ENCODE measurements at regions of chr7 and their contacts with region 1.

Region 1: DNA sequence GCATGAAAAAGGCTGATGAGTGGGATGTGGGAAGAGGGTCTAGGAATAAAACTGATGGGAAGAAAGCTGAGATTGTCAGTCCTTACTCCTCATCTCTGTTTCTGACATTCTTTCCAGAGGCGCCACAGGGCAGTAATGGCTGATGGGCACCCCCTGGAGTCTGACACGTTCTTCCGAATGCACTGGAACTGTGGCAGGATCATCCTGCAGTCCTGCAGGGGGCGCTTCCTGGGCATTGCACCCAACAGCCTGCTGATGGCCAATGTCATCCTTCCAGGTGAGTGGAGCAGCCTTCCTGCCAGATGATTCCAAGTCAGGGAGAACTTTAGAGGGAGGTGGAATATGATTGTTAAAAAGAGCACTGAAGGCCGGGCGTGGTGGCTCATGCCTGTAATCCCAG is 4.8 kb downstream of the FSCN3 start:
- DNase-seq: no peak
- H3K4me3 ChIP-seq: no peak overlapping the region
- CTCF ChIP-seq: no peak
- POLR2A ChIP-seq: no peak

Region 2: DNA sequence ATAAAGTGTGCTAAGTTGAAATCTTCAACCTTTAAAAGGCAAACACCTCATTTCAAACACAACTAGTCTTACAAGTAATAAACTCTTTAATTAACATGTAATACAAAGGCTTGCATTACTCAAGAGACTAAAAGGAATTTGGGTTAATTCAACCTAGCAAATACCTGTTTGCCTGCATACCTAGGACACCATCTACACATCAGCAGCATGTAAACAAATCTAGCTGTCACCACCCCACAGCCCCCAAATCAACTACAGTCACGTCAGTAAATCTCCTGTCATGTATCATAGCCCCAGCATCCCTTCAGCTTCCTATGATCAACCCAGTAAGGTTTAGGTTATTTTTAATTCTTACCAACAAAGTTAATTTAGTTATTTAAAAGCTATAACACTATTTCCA is 239.3 kb before region 1 on chr7:
- intact Hi-C with region 1: no loop called
- DNase-seq: no peak
- H3K4me3 ChIP-seq: no peak overlapping the region
- CTCF ChIP-seq: no peak
- POLR2A ChIP-seq: no peak

Region 3: DNA sequence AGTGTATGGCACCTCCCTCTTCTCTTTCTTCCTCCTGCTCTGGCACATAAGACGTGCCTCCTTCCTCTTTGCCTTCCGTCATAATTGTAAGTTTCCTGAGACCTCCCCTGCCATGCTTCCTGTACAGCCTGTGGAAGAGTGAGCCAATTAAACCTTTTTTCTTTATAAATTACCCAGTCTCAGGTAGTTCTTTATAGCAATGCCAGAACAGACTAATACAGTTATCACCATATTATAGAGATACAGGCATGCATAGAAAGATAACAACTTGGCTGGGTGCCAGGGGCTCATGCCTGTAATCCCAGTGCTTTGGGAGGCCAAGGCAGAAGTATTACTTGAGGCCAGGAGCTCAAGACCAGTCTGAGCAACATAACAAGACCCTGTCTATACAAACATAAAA is 66.2 kb before region 1 on chr7:
- intact Hi-C with region 1: loop called (anchors 2 kb)
- DNase-seq: no peak
- H3K4me3 ChIP-seq: no peak overlapping the region
- CTCF ChIP-seq: no peak
- POLR2A ChIP-seq: no peak

Measured in lower leg skin (tissue), 4 donors.